ENCODE measurements at regions of chr5 and their contacts with region 1.

Region 1: DNA sequence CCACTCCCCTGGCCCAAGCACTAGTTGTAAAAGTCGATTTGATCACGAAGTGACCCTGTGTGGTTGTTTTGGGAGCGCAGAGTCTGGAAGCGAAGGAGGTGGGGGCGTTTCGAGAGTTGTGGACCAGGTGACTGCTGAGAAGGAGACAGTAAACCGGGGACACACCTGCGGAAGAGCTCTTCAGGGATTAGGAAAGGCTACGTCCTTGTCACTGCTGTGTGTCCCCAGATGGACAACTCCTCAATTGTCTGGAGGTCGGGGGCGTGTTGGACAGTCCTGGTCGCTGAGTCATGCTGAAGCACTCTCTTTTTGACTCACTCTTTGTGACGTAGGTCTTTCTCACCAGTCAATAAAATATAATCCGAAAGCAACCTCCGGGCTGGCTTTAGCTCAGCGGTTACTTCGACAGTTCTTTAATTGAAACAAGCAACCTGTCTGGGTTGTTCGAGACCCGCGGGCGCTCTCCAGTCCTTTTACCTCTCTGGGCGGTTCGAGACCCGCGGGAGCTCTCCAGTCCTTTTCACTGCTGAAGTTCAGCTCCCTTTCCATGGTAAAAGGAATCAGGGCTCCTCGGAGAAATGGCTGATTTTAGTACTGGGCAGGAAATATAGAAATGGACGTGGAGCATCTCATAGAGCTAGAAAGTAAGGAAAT is 10.8 kb downstream of the ZMAT2 start:
- DNase-seq: peak; percentile 57 to 94 (median 87)
- ATAC-seq: peak; percentile 89
- H3K4me3 ChIP-seq: peak overlapping the region; percentile 96
- H3K4me3 Mint-ChIP-seq: peak overlapping the region; percentile 95 to 100 (median 99)
- H3K27ac ChIP-seq: peak overlapping the region; percentile 72
- H3K27ac Mint-ChIP-seq: peak overlapping the region; percentile 98 to 100 (median 99)
- H3K4me1 ChIP-seq: peaks cover 0 to 5% of the 10 kb centered on the region in 2 donors
- H3K4me1 Mint-ChIP-seq: peaks cover 6 to 35% (median 25%) of the 10 kb centered on the region in 7 donors
- H3K27me3 ChIP-seq: no peaks in the 10 kb centered on the region
- H3K27me3 Mint-ChIP-seq: peaks cover 0 to 11% (median 0%) of the 10 kb centered on the region in 5 donors

Region 2: GRCh38 chr5:140302786-140303639 is 408.0 kb before region 1 on chr5 and contains the start of gene PFDN1:
- CTCF ChIA-PET with region 1: no interaction called
- POLR2A ChIA-PET with region 1: interaction called, 3 read pairs
- intact Hi-C with region 1: loop called in 1 of 2 experiments (anchors 2 kb)
- DNase-seq: peak; percentile 79 to 94 (median 89)
- ATAC-seq: peak; percentile 99
- H3K4me3 ChIP-seq: peak within 1 kb of the TSS; percentile 90
- H3K4me3 Mint-ChIP-seq: peak within 1 kb of the TSS; percentile 92 to 100 (median 98)
- H3K27ac ChIP-seq: peak within 1 kb of the TSS; percentile 91
- H3K27ac Mint-ChIP-seq: peak within 1 kb of the TSS; percentile 95 to 100 (median 98)
- H3K4me1 ChIP-seq: peaks cover 10 to 11% of the 10 kb centered on the region in 2 donors
- H3K4me1 Mint-ChIP-seq: peaks cover 4 to 39% (median 33%) of the 10 kb centered on the region in 7 donors
- H3K27me3 ChIP-seq: no peaks in the 10 kb centered on the region
- H3K27me3 Mint-ChIP-seq: peaks cover 0 to 9% (median 5%) of the 10 kb centered on the region in 5 donors
- total RNA-seq, gene PFDN1: 24.8 to 52.7 (median 28.2) TPM

Region 3: DNA sequence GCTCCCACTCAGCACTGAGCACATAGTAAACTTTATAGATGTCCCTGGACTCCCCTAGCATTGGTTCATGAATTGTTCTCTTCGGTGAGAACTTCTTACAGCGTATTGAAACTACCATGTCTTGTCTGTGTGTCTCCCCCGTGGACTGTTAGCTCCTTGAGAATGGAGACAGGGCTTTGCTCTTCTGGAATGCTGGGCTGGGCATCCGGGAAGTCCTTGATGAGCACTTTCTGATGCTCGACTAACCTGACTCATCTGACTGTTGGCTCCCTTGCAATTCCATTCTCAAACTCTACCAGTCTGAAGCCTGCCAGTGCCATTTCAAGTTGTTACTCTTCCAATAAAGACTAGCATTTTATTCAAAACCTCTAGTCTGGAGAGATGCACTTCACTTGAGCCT is 393.2 kb before region 1 on chr5:
- CTCF ChIA-PET with region 1: no interaction called
- POLR2A ChIA-PET with region 1: no interaction called
- intact Hi-C with region 1: no loop called
- DNase-seq: no peak
- ATAC-seq: no peak
- H3K4me3 ChIP-seq: no peak overlapping the region
- H3K4me3 Mint-ChIP-seq: no peak overlapping the region
- H3K27ac ChIP-seq: no peak overlapping the region
- H3K27ac Mint-ChIP-seq: no peak overlapping the region
- H3K4me1 ChIP-seq: no peaks in the 10 kb centered on the region
- H3K4me1 Mint-ChIP-seq: peaks cover 0 to 7% (median 0%) of the 10 kb centered on the region in 7 donors
- H3K27me3 ChIP-seq: no peaks in the 10 kb centered on the region
- H3K27me3 Mint-ChIP-seq: no peaks in the 10 kb centered on the region

Region 4: DNA sequence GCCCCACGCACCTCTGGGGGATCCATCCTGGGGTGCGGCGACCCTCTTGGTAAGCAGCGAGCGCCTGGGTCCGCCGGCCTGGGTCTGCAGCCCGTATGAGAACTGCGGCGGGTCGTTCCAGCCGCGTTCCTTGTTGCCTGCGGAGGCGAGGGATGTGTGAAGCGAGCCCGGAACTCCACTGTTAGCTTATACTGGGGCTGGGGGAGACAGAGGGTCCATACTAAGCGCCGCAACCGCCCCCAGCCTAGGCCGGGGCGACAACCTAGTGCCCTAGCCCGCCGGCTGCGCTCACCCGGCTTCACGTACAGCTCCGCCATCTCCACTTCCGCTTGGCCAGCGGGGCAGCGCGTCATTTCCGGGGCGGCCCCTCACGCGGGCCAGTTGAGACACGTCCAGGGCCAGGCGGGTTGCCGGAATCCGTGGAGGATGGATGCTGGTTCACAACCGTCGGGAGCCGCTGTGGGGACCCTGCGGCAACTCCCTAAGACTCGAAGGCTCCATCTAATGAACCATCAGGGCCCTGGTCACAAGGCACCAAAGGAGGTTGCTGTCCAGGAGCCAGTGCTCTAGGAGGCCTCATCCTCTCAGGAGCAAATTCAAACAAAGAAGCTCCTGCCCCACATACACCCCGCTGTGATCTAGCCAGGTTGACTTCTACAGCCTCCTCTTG is 153.8 kb before region 1 on chr5 and contains the start of gene SRA1:
- CTCF ChIA-PET with region 1: no interaction called
- POLR2A ChIA-PET with region 1: interaction called, 10 read pairs
- intact Hi-C with region 1: no loop called
- DNase-seq: peak; percentile 62 to 91 (median 72)
- ATAC-seq: peak; percentile 94
- H3K4me3 ChIP-seq: peak within 1 kb of the TSS; percentile 73
- H3K4me3 Mint-ChIP-seq: peak within 1 kb of the TSS; percentile 84 to 93 (median 92)
- H3K27ac ChIP-seq: peak within 1 kb of the TSS; percentile 97
- H3K27ac Mint-ChIP-seq: peak within 1 kb of the TSS; percentile 85 to 97 (median 95)
- H3K4me1 ChIP-seq: peaks cover 14 to 20% of the 10 kb centered on the region in 2 donors
- H3K4me1 Mint-ChIP-seq: peaks cover 45 to 63% (median 50%) of the 10 kb centered on the region in 7 donors
- H3K27me3 ChIP-seq: no peaks in the 10 kb centered on the region
- H3K27me3 Mint-ChIP-seq: no peaks in the 10 kb centered on the region
- total RNA-seq, gene SRA1: 23.8 to 45.5 (median 34.0) TPM

Region 5: DNA sequence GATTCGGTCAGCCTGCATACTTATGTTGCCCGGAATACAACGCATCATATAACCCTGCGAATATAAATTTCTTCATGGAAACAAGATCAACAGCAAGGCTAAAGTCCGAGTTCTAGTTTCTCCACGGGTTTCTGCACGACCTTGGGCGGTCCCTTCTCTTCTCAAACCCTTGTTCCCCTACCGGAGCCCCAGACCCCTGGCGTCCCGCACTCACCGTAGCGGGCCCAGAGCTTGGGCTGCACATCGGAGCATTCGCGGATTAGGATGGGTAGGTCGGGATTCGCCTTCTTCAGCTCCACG is 64.0 kb before region 1 on chr5:
- CTCF ChIA-PET with region 1: interaction called, 5 read pairs
- POLR2A ChIA-PET with region 1: interaction called, 48 read pairs
- intact Hi-C with region 1: loop called (anchors 1 kb)
- DNase-seq: no peak
- ATAC-seq: no peak
- H3K4me3 ChIP-seq: peak overlapping the region; percentile 80
- H3K4me3 Mint-ChIP-seq: peak overlapping the region; percentile 88 to 100 (median 98)
- H3K27ac ChIP-seq: peak overlapping the region; percentile 95
- H3K27ac Mint-ChIP-seq: peak overlapping the region; percentile 93 to 100 (median 99)
- H3K4me1 ChIP-seq: peaks cover 18% of the 10 kb centered on the region in 2 donors
- H3K4me1 Mint-ChIP-seq: peaks cover 32 to 72% (median 61%) of the 10 kb centered on the region in 7 donors
- H3K27me3 ChIP-seq: no peaks in the 10 kb centered on the region
- H3K27me3 Mint-ChIP-seq: no peaks in the 10 kb centered on the region

Region 6: DNA sequence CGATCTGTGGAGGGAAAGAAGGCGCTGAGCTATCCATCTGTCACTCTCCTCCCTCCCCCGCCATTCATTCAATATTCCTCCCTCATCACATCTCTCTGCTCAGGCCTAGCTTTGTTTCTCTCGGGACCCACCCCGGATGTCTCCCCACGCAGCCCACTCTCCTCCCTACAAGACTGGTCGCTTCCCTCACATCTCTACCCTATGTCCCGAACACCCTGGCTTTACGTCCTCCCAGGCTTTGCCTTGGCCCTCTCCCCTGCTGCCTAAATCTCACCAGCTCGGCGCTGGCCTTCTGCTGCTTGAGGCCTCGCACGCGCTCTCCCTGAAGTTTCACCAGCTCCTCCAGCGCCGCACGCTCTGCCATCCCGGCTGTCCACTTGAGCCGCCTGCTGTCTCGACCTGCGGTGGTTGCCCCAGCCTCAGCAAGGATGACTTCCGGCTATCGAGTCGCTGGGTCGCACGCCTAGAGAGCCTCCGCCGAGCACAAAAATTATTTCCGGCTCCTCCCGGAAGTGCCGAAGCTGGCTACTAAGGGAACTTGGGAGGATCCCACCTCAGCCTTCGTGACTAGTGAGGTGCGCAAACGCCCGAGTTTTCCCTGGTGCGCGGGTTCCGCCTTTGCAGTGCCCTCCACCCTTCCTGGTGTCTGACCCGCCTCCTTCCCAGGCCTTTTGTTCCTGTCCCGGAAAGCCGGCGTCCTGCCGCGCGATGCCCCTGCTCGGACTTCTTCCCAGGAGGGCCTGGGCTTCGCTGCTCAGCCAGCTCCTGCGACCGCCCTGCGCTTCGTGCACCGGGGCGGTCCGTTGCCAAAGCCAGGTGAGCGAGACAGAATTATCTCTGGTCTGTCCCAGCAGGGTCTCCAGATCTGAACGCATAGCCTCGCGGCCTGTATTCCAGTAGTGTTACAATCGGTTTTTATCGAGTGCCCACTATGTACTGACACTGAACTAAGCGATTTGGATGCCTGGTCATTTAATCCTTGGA is 19.8 kb before region 1 on chr5 and contains the starts of genes HARS1 and HARS2:
- CTCF ChIA-PET with region 1: interaction called, 7 read pairs
- POLR2A ChIA-PET with region 1: interaction called, 19 read pairs
- intact Hi-C with region 1: loop called (anchors 1 kb)
- DNase-seq: peak; percentile 55 to 83 (median 71)
- ATAC-seq: peak; percentile 97
- H3K4me3 ChIP-seq: peak within 1 kb of the TSS; percentile 91
- H3K4me3 Mint-ChIP-seq: peak within 1 kb of the TSS; percentile 92 to 100 (median 99)
- H3K27ac ChIP-seq: peak within 1 kb of the TSS; percentile 89
- H3K27ac Mint-ChIP-seq: peak within 1 kb of the TSS; percentile 91 to 99 (median 98)
- H3K4me1 ChIP-seq: peaks cover 16 to 22% of the 10 kb centered on the region in 2 donors
- H3K4me1 Mint-ChIP-seq: peaks cover 29 to 60% (median 53%) of the 10 kb centered on the region in 7 donors
- H3K27me3 ChIP-seq: no peaks in the 10 kb centered on the region
- H3K27me3 Mint-ChIP-seq: no peaks in the 10 kb centered on the region
- total RNA-seq, gene HARS1: 48.7 to 85.7 (median 68.5) TPM
- total RNA-seq, gene HARS2: 25.4 to 59.6 (median 38.8) TPM

Region 7: GRCh38 chr5:140725799-140726471 is 14.9 kb after region 1 on chr5:
- CTCF ChIA-PET with region 1: interaction called, 7 read pairs
- POLR2A ChIA-PET with region 1: interaction called, 5 read pairs
- intact Hi-C with region 1: loop called in 1 of 2 experiments (anchors 1 kb)
- DNase-seq: peak; percentile 9 to 80 (median 45)
- ATAC-seq: peak; percentile 93
- H3K4me3 ChIP-seq: peak overlapping the region; percentile 40
- H3K4me3 Mint-ChIP-seq: peak overlapping the region; percentile 37 to 81 (median 68)
- H3K27ac ChIP-seq: no peak overlapping the region
- H3K27ac Mint-ChIP-seq: peak overlapping the region in 7 of 9 donors; percentile 51 to 93 (median 77)
- H3K4me1 ChIP-seq: no peaks in the 10 kb centered on the region
- H3K4me1 Mint-ChIP-seq: peaks cover 0 to 22% (median 17%) of the 10 kb centered on the region in 7 donors
- H3K27me3 ChIP-seq: peaks cover 0 to 4% of the 10 kb centered on the region in 2 donors
- H3K27me3 Mint-ChIP-seq: peaks cover 26 to 49% (median 35%) of the 10 kb centered on the region in 5 donors

Measured in naive thymus-derived CD4-positive, alpha-beta T cell (primary cell).